ENCODE measurements at regions of chr2 and their contacts with region 1.

Region 1: GRCh38 chr2:72033636-72034035 is 114.0 kb downstream of the CYP26B1 start:
- DNase-seq: no peak
- ATAC-seq: peak in 2 of 8 donors; percentile 11 to 62
- H3K4me3 ChIP-seq: no peak overlapping the region
- H3K27ac ChIP-seq: no peak overlapping the region
- H3K4me1 ChIP-seq: no peaks in the 10 kb centered on the region
- H3K27me3 ChIP-seq: peaks cover 0 to 5% (median 0%) of the 10 kb centered on the region in 7 donors
- CTCF ChIP-seq: no peak

Region 2: GRCh38 chr2:71379088-71379487 is 654.5 kb before region 1 on chr2:
- intact Hi-C with region 1: no loop called
- DNase-seq: no peak
- ATAC-seq: peak in 1 of 8 donors; percentile 61
- H3K4me3 ChIP-seq: no peak overlapping the region
- H3K27ac ChIP-seq: no peak overlapping the region
- H3K4me1 ChIP-seq: peaks cover 0 to 11% (median 4%) of the 10 kb centered on the region in 9 donors
- H3K27me3 ChIP-seq: no peaks in the 10 kb centered on the region
- CTCF ChIP-seq: no peak

Region 3: GRCh38 chr2:72165792-72166191 is 132.2 kb after region 1 on chr2:
- intact Hi-C with region 1: no loop called
- DNase-seq: no peak
- ATAC-seq: no peak
- H3K4me3 ChIP-seq: no peak overlapping the region
- H3K27ac ChIP-seq: no peak overlapping the region
- H3K4me1 ChIP-seq: no peaks in the 10 kb centered on the region
- H3K27me3 ChIP-seq: no peaks in the 10 kb centered on the region
- CTCF ChIP-seq: no peak

Region 4: GRCh38 chr2:72300147-72300684 is 266.6 kb after region 1 on chr2:
- intact Hi-C with region 1: loop called in 1 of 10 experiments (anchors 5 kb)
- DNase-seq: no peak
- ATAC-seq: no peak
- H3K4me3 ChIP-seq: no peak overlapping the region
- H3K27ac ChIP-seq: no peak overlapping the region
- H3K4me1 ChIP-seq: peaks cover 0 to 3% (median 0%) of the 10 kb centered on the region in 9 donors
- H3K27me3 ChIP-seq: no peaks in the 10 kb centered on the region
- CTCF ChIP-seq: no peak